AG04449 (cell line): ENCODE measurements at regions of chr4 and their contacts with region 1.

Region 1: DNA sequence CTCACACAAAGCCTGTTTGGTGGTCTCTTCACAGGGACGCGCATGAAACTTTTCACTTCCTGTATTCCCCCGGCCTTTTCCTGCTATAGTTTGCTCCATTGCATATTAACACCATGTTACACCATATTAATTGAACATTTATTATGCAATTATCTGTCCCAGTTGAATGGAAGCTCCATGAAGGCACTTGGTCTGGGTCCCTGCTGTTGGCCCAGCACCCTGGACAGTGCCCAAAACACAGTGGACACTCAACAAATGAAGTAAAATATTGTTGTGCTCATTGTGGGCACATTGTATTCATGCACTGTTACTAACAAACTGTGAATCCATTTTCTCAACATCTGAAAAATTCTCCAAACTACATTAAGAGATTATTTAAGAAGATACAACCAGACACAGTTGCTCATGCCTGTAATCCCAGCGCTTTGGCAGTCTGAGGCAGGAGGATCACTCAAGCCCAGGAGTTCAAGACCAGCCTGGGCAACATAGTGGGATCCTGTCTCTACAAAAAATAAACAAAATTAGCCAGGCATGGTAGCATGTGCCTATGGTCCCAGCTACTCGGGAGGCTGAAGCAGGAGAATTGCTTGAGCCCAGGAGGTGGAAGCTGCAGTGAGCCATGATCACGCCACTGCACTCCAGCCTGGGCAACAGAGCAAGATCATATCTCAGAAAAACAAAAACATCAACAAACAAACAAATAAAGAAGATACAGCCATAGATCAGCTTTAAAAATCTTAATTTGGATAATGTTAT is 292.7 kb upstream of the TENM3 start:
- DNase-seq: no peak
- H3K4me3 ChIP-seq: no peak overlapping the region
- CTCF ChIP-seq: no peak

Region 2: GRCh38 chr4:181939199-181939945 is 11.2 kb before region 1 on chr4:
- CTCF ChIA-PET with region 1: interaction called, 10 read pairs
- POLR2A ChIA-PET with region 1: no interaction called
- DNase-seq: no peak
- H3K4me3 ChIP-seq: no peak overlapping the region
- CTCF ChIP-seq: no peak